HEK293 (cell line): ENCODE measurements at regions of chr1 and their contacts with region 1.

Region 1: GRCh38 chr1:167220537-167221125 is at the start of gene POU2F1:
- H3K4me3 ChIP-seq: peak within 1 kb of the TSS; percentile 86
- H3K27ac ChIP-seq: peak within 1 kb of the TSS; percentile 98
- H3K4me1 ChIP-seq: peaks cover 15% of the 10 kb centered on the region
- CTCF ChIP-seq: peak; percentile 87

Region 2: GRCh38 chr1:167066333-167067122 is 154.1 kb before region 1 on chr1:
- CTCF ChIA-PET with region 1: interaction called, 22 read pairs
- POLR2A ChIA-PET with region 1: interaction called, 7 read pairs
- H3K4me3 ChIP-seq: peak overlapping the region; percentile 18
- H3K27ac ChIP-seq: no peak overlapping the region
- H3K4me1 ChIP-seq: no peaks in the 10 kb centered on the region
- CTCF ChIP-seq: peak; percentile 85

Region 3: DNA sequence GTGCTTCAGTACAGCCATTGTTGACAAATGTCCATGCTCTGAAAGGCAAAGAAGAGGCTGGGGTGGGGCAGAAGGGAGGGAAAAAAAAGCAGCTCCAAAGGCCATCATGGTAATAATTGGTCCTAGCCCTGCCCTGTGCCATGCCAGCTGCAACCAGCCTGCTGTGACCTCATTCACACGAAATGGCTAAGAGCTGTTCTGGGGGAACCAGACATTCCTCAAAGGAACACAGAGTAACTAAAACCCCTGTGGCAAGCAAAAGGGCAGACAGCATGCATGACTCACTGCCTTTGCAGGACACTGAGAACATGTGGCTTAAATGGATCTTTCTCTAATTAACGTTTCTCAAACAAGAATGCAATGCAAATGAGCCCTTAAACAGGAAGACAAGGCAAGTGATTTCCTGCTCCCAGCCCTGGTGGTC is 84.4 kb before region 1 on chr1:
- CTCF ChIA-PET with region 1: interaction called, 3 read pairs
- POLR2A ChIA-PET with region 1: interaction called, 10 read pairs
- H3K4me3 ChIP-seq: no peak overlapping the region
- H3K27ac ChIP-seq: no peak overlapping the region
- H3K4me1 ChIP-seq: no peaks in the 10 kb centered on the region
- CTCF ChIP-seq: no peak

Region 4: GRCh38 chr1:167165948-167166689 is 54.5 kb before region 1 on chr1:
- CTCF ChIA-PET with region 1: interaction called, 14 read pairs
- POLR2A ChIA-PET with region 1: interaction called, 30 read pairs
- H3K4me3 ChIP-seq: no peak overlapping the region
- H3K27ac ChIP-seq: peak overlapping the region; percentile 73
- H3K4me1 ChIP-seq: peaks cover 15% of the 10 kb centered on the region
- CTCF ChIP-seq: no peak

Region 5: DNA sequence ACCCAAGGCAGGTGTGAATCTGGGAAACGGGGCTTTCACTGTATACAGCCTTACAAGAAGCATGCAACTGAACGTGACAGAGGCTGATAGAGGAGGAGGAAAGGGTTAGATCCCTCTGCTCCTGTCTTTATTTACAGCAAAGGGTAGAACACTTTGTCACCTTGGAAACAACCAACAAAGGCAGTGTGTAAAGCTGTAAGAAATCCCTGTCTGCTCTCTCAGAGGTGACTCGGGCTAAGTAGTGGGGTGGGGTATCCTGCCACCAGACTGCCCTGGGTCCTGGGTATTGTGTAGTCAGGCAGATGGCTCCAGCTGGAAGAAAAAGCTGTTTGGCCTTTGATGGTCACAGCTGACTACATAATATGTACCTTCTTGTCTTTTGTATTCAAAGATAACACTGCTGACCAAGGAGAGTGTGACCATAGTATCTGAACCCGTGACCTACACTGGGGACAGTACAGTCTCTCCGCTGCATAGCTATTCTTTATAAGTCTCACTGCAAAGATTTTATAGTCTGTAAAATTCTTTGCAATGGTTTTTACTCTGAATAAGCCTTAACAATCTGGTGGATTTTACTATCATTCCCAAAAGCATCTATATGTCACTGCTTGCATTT is 22.0 kb before region 1 on chr1:
- CTCF ChIA-PET with region 1: interaction called, 8 read pairs
- POLR2A ChIA-PET with region 1: interaction called, 12 read pairs
- H3K4me3 ChIP-seq: no peak overlapping the region
- H3K27ac ChIP-seq: no peak overlapping the region
- H3K4me1 ChIP-seq: no peaks in the 10 kb centered on the region
- CTCF ChIP-seq: no peak

Region 6: DNA sequence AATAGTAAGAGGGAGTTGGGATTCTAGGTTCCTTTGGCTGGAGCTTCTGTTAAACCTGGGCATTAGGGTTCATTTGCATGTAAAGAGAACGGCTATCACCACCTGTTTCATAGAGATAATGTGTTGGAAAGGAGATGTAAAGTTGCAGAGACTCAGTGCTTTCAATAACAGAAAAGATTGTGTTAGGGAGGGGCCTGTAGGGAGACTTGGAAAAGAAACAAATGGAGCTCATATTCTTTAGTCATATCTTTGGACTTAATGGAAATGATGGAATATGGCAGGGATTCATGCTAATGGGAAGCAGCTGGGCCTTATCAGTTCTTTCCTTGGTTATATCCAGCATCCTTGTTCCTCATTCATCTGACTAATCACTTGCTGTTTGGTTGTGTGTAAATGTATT is 152.8 kb after region 1 on chr1:
- CTCF ChIA-PET with region 1: no interaction called
- POLR2A ChIA-PET with region 1: no interaction called
- H3K4me3 ChIP-seq: no peak overlapping the region
- H3K27ac ChIP-seq: no peak overlapping the region
- H3K4me1 ChIP-seq: no peaks in the 10 kb centered on the region
- CTCF ChIP-seq: no peak

Region 7: DNA sequence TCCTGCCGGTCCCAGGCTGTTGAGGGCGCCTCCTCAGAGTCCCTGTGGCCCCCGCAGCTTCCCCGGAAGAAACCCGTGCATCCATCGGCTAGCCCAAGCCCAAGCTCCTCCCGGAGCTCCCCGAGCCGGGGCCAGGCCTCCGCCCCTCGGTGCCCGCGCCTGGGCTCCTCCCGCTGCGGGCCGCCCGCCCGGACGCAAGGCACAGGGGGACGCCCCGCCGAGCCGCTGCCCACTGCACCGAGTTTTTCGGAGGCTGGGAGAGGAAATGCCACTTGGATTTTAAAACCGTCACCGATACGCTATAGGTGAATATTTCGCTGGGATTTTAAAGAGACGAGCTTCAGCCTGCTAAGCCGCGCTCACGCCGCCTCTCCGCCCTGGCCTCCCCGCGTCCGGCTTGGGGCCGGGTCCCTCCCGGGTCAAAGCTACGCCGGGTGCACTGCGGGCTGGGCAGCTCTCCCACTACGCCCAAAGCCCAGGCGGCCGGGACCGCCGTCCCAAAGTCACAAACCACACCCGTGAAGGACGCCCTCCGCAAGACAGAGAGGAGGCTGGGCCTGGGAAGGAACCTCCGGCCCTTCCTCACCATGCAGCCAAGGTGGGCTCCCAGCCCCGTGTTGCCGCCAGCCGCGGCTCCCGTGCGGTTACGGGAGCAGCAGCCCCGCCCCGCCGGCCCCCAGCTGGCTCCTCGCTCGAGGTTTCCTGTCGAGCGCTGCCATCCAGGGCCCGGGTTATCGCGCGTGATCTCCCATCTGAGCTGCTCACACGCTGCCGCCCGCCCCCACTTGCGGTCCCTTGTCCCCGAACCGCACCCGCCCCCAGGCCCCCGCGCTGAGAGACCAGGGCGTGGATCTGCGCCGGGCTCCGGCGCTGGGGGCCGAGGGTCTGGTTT is 234.5 kb after region 1 on chr1:
- CTCF ChIA-PET with region 1: no interaction called
- POLR2A ChIA-PET with region 1: interaction called, 16 read pairs
- H3K4me3 ChIP-seq: peak overlapping the region; percentile 63
- H3K27ac ChIP-seq: peak overlapping the region; percentile 76
- H3K4me1 ChIP-seq: no peaks in the 10 kb centered on the region
- CTCF ChIP-seq: no peak

Region 8: GRCh38 chr1:167553136-167554027 is 332.8 kb after region 1 on chr1 and contains the start of gene CREG1:
- CTCF ChIA-PET with region 1: interaction called, 3 read pairs
- POLR2A ChIA-PET with region 1: interaction called, 14 read pairs
- H3K4me3 ChIP-seq: peak within 1 kb of the TSS; percentile 67
- H3K27ac ChIP-seq: peak within 1 kb of the TSS; percentile 57; the same call in 1 of the 2 replicates
- H3K4me1 ChIP-seq: no peaks in the 10 kb centered on the region
- CTCF ChIP-seq: no peak